OCI-LY7 (cell line): ENCODE measurements at regions of chr13 and their contacts with region 1.

Region 1: DNA sequence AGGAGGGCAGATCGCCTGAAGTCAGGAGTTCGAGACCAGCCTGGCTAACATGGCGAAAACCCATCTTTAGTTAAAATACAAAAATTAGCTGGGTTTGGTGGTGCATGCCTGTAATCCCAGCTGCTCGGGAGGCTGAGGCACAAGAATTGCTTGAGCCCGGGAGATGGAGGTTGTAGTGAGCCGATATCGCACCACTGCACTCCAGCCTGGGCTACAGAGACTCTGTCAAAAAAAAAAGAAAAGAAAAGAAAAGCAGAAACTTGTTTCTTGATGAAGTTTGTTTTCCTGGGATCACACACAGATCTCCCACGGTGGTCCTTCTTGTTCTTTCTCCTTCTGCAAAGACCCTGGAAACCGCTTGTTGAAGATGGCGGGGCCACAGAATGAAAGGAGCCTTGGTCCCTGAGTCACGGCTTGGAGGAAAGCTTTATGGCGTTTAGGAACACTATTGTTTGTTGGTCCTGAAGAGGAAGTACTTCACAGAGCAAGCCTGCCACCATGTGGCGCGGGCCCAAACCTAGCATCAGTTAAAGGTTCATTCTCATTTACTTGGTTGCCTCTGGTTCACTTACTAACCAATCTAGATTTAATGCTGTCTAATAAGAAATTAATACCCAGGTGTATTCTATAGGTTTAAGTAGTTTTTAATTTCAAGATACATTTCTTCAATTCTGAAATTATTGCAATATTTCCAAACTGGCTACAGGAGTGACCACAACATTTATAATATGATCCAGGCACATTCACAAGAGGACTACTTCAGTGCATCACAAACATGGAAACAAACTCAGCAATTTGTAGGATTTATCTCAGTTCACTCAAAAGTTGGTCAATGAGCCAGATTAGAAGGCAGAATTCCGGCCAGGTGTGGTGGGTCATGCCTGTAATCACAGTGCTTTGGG is 21.3 kb upstream of the ARL11 start:
- DNase-seq: peak; percentile 93
- H3K4me3 ChIP-seq: peak overlapping the region; percentile 53
- H3K27ac ChIP-seq: peak overlapping the region; percentile 71
- H3K4me1 ChIP-seq: peaks cover 57% of the 10 kb centered on the region
- CTCF ChIP-seq: peak; percentile 98

Region 2: GRCh38 chr13:49247643-49248621 is 359.1 kb before region 1 on chr13 and contains the start of gene CDADC1:
- CTCF ChIA-PET with region 1: no interaction called
- POLR2A ChIA-PET with region 1: interaction called, 5 read pairs
- intact Hi-C with region 1: loop called (anchors 5 kb)
- DNase-seq: peak; percentile 97
- H3K4me3 ChIP-seq: peak within 1 kb of the TSS; percentile 83
- H3K27ac ChIP-seq: peak within 1 kb of the TSS; percentile 25
- H3K4me1 ChIP-seq: peaks cover 11% of the 10 kb centered on the region
- CTCF ChIP-seq: 0 out of 2 replicates have a peak, but pooled peaks have one; percentile 16
- total RNA-seq, gene CDADC1: 9.1 and 18.8 TPM in 2 replicates

Region 3: GRCh38 chr13:49300739-49301589 is 306.0 kb before region 1 on chr13:
- CTCF ChIA-PET with region 1: interaction called, 3 read pairs
- POLR2A ChIA-PET with region 1: interaction called, 11 read pairs
- intact Hi-C with region 1: loop called (anchors 1 kb)
- DNase-seq: peak; percentile 90
- H3K4me3 ChIP-seq: peak overlapping the region; percentile 39
- H3K27ac ChIP-seq: no peak overlapping the region
- H3K4me1 ChIP-seq: peaks cover 44% of the 10 kb centered on the region
- CTCF ChIP-seq: peak; percentile 98

Region 4: GRCh38 chr13:49421391-49421790 is 185.6 kb before region 1 on chr13:
- CTCF ChIA-PET with region 1: no interaction called
- POLR2A ChIA-PET with region 1: interaction called, 4 read pairs
- intact Hi-C with region 1: loop called (anchors 1 kb)
- DNase-seq: peak; percentile 83
- H3K4me3 ChIP-seq: no peak overlapping the region
- H3K27ac ChIP-seq: no peak overlapping the region
- H3K4me1 ChIP-seq: peaks cover 54% of the 10 kb centered on the region
- CTCF ChIP-seq: peak; percentile 80

Region 5: GRCh38 chr13:49540552-49540951 is 66.4 kb before region 1 on chr13:
- CTCF ChIA-PET with region 1: no interaction called
- POLR2A ChIA-PET with region 1: interaction called, 9 read pairs
- intact Hi-C with region 1: loop called (anchors 1 kb)
- DNase-seq: peak; percentile 69
- H3K4me3 ChIP-seq: peak overlapping the region; percentile 61
- H3K27ac ChIP-seq: peak overlapping the region; percentile 81
- H3K4me1 ChIP-seq: peaks cover 42% of the 10 kb centered on the region
- CTCF ChIP-seq: no peak

Region 6: GRCh38 chr13:49620170-49620621 is 13.2 kb after region 1 on chr13:
- CTCF ChIA-PET with region 1: interaction called, 5 read pairs
- POLR2A ChIA-PET with region 1: interaction called, 29 read pairs
- intact Hi-C with region 1: no loop called
- DNase-seq: peak; percentile 74
- H3K4me3 ChIP-seq: peak overlapping the region; percentile 54
- H3K27ac ChIP-seq: peak overlapping the region; percentile 58
- H3K4me1 ChIP-seq: peaks cover 27% of the 10 kb centered on the region
- CTCF ChIP-seq: no peak

Region 7: DNA sequence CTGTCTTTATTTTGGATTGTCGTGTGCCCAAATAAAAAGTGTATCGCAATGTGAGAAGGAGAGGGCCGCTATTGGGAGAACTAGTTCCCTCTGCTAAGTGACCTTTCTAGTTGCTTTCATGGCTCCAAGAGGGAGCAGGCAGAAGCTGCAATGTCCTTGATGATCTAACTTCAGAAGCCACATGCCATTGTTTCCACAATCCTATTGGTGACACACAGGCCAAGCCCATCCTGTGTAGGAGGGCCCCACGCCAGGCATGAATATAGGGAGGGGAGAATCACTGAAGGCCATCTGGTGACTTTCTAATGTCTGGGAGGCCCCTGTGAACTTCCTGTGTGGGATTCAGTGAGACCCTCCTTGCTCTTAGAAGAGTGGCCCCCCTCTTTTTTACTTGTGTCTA is 233.3 kb after region 1 on chr13:
- CTCF ChIA-PET with region 1: no interaction called
- POLR2A ChIA-PET with region 1: no interaction called
- intact Hi-C with region 1: loop called (anchors 5 kb)
- DNase-seq: no peak
- H3K4me3 ChIP-seq: no peak overlapping the region
- H3K27ac ChIP-seq: no peak overlapping the region
- H3K4me1 ChIP-seq: no peaks in the 10 kb centered on the region
- CTCF ChIP-seq: no peak